ENCODE measurements at regions of chr13 and their contacts with region 1.

Region 1: DNA sequence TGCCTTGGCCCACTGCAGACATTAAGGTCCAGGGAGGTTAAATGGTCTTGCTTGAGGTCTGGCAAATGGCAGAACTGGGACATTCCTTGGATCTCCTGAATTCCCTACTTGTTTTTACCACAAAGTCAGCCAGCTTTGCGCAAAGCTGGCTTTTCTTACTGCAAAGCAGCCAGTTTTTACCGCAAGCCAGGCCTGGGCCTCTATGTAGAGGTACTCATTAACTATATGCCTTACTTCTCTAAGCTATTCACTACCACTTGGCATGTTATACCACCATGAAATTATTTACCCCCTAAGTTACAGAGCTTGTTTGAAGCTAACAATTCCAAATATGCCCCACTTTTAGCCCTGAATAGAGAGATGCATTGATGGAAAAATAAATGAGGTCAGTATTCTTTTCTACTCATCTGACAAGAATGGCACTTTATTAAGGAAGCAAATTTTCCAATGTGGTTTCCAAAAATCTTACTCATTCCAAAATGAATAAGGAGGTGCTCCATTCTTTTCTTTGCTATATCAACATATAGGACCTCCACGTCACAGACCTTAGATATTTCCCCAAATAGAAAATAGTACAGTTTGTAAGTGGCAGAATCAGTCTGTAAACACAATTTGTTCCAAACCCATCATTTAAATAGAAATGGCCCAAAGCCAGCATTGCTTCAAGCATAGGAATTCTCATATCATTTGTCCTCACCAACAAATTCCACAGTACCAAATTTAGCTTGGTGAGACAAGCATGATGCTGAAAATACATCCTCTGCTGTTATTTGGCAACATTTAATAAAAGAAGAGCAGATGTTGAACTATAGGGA is 143.9 kb upstream of the TSC22D1 start:
- DNase-seq: peak in 1 of 2 donors; percentile 55
- ATAC-seq: peak; percentile 63
- H3K4me3 ChIP-seq: no peak overlapping the region
- H3K27ac ChIP-seq: peak overlapping the region; percentile 11 to 86
- H3K4me1 ChIP-seq: peaks cover 4 to 5% of the 10 kb centered on the region in 2 donors
- H3K27me3 ChIP-seq: no peaks in the 10 kb centered on the region

Region 2: GRCh38 chr13:44810061-44810840 is 90.2 kb after region 1 on chr13:
- intact Hi-C with region 1: loop called in 1 of 2 experiments (anchors 5 kb)
- DNase-seq: peak in 1 of 2 donors; percentile 57
- ATAC-seq: no peak
- H3K4me3 ChIP-seq: no peak overlapping the region
- H3K27ac ChIP-seq: peak overlapping the region; percentile 50 to 64
- H3K4me1 ChIP-seq: peaks cover 7 to 11% of the 10 kb centered on the region in 2 donors
- H3K27me3 ChIP-seq: no peaks in the 10 kb centered on the region

Region 3: DNA sequence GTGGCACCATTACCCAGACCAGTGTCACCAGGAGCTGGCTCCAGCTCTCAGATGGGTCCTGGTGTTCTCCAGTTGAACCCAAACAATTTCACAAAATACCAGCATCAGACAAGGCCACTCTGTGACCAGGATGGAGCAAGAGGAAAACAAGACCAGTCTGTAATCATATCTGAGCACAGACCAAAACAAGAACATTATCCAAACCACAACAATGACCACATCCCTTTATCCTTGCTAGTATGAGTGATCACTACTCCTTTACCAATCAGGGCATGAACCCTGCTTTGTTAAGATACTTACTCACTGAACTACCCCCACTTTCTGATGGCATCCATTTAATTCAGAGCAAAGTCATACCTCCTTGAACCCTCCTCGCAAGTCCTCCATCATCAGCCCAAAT is 123.3 kb after region 1 on chr13:
- intact Hi-C with region 1: loop called in 1 of 2 experiments (anchors 10 kb)
- DNase-seq: no peak
- ATAC-seq: no peak
- H3K4me3 ChIP-seq: no peak overlapping the region
- H3K27ac ChIP-seq: peak overlapping the region in 1 of 2 donors; percentile 89
- H3K4me1 ChIP-seq: peaks cover 0 to 4% of the 10 kb centered on the region in 2 donors
- H3K27me3 ChIP-seq: no peaks in the 10 kb centered on the region